ENCODE measurements at regions of chr15 and their contacts with region 1.

Region 1: DNA sequence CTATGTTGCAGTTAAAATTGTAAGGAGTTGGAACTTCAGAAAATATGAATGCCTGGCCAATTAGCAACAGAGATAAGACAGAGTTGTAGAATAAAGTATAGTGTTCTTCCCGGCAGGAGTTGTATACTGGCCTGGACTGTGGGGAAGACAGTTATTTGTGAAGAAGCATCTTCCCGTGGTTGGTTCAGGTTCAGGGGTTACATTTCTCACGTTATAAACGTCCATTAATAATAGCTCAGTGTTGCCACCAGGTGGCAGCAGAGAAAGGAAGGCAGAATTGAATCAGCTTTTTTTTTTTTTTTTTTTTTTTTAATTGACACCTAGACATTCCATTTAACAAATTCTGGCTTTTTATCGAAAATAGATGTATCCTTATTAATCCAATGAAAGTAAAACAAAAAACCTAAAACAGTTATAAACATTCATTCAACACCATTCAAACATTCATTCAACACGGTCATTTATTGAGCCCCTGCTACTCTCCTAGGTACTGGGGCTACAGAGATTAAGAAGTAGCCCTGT is 66.4 kb upstream of the NR2E3 start:
- DNase-seq: peak; percentile 46
- ATAC-seq: no peak; the same call in 1 of the 2 replicates
- H3K4me3 Mint-ChIP-seq: no peak overlapping the region
- H3K27ac Mint-ChIP-seq: no peak overlapping the region
- H3K4me1 Mint-ChIP-seq: no peaks in the 10 kb centered on the region
- H3K27me3 Mint-ChIP-seq: no peaks in the 10 kb centered on the region
- CTCF ChIP-seq: peak; percentile 67

Region 2: GRCh38 chr15:71532994-71533393 is 210.9 kb before region 1 on chr15:
- CTCF ChIA-PET with region 1: interaction called, 12 read pairs
- POLR2A ChIA-PET with region 1: interaction called, 4 read pairs
- DNase-seq: peak; percentile 32
- ATAC-seq: peak; percentile 60
- H3K4me3 Mint-ChIP-seq: no peak overlapping the region; the same call in 1 of the 2 replicates
- H3K27ac Mint-ChIP-seq: no peak overlapping the region
- H3K4me1 Mint-ChIP-seq: no peaks in the 10 kb centered on the region
- H3K27me3 Mint-ChIP-seq: no peaks in the 10 kb centered on the region
- CTCF ChIP-seq: peak; percentile 75

Region 3: DNA sequence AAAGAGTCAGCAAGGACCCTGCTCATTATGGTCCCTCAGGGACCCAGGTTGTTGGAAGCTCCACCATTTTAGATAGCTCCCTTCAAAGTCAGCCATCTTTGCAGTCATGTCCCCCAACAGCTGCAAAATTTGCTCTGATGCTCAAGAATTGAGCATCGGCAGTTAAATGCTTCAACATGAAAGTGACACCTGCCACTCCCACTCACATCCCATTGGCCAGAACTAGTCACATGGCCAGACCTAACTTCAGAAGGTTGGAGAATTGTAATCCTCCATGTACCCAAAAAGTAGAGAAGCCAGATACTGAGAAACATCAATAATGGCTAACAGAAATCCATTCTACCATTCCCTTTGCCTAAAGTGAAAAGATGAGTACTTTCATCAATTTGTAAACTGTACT is 105.0 kb before region 1 on chr15:
- CTCF ChIA-PET with region 1: interaction called, 10 read pairs
- POLR2A ChIA-PET with region 1: no interaction called
- DNase-seq: no peak
- ATAC-seq: no peak
- H3K4me3 Mint-ChIP-seq: no peak overlapping the region
- H3K27ac Mint-ChIP-seq: no peak overlapping the region
- H3K4me1 Mint-ChIP-seq: peaks cover 33% of the 10 kb centered on the region
- H3K27me3 Mint-ChIP-seq: no peaks in the 10 kb centered on the region
- CTCF ChIP-seq: no peak

Region 4: DNA sequence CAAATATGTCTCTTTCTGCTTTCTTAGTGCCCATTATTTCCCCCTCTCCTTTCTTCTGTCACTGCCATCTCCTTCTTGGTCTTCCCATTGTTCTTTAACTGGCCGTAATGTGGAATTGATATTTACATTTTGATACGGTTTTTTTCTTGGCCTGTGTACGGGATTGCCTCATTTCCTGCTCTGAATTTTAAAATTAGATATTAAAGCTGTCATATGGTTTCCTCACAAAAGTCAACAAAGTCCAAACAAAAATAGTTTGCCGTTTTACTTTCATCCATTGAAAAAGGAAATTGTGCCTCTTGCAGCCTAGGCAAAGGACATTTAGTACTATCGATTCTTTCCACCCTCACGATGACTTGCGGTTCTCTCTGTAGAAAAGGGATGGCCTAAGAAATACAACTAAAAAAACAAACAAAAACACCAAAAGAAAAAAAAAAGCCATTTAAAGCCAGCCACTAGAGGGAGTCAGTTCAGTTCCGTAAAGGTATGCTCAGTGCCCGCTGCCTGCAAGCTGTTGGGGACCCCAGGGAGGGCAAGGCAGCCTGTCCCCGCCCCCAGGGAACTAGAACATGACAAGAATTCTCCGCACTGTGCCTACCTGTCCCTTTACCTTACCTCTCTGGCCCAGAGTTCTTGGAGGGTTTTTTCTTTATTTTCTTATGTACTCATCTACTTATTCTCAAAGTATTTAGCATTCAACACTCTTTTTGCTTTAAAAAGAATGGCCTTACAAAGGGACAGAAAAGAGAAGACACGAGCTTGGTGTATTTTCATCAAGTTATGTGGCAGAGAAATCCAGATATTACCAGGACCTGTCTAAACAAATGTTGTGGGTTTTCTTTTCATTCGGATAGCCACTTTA is 36.4 kb after region 1 on chr15:
- CTCF ChIA-PET with region 1: interaction called, 18 read pairs
- POLR2A ChIA-PET with region 1: no interaction called
- DNase-seq: peak; percentile 81
- ATAC-seq: peak; percentile 95
- H3K4me3 Mint-ChIP-seq: no peak overlapping the region
- H3K27ac Mint-ChIP-seq: peak overlapping the region; percentile 63
- H3K4me1 Mint-ChIP-seq: peaks cover 9% of the 10 kb centered on the region
- H3K27me3 Mint-ChIP-seq: no peaks in the 10 kb centered on the region
- CTCF ChIP-seq: peak; percentile 75

Region 5: GRCh38 chr15:71806452-71806931 is 62.6 kb after region 1 on chr15:
- CTCF ChIA-PET with region 1: interaction called, 34 read pairs
- POLR2A ChIA-PET with region 1: no interaction called
- DNase-seq: no peak
- ATAC-seq: no peak
- H3K4me3 Mint-ChIP-seq: peak overlapping the region; percentile 60
- H3K27ac Mint-ChIP-seq: peak overlapping the region; percentile 87; the same call in 1 of the 2 replicates
- H3K4me1 Mint-ChIP-seq: peaks cover 48% of the 10 kb centered on the region
- H3K27me3 Mint-ChIP-seq: no peaks in the 10 kb centered on the region; the same call in 1 of the 2 replicates
- CTCF ChIP-seq: no peak

Region 6: DNA sequence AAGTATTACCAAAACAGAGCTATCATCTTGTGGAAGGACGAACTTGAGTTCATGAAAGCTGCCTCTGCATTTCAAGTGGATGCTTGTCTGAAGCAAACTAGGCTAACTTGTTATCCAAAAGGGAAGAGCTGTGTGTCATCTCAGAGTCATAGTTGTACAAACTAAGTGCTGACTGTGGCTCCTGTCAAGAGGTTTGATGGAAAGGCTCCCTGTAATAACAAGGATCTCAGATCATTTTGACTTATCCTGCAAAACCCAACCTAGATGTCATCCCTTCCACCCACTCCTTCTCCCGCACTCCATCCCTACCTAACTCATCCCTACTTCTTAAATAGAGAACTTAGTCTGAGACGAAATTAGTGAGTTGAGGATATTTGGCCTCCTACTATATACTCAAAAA is 177.3 kb after region 1 on chr15:
- CTCF ChIA-PET with region 1: no interaction called
- POLR2A ChIA-PET with region 1: no interaction called
- DNase-seq: no peak
- ATAC-seq: no peak
- H3K4me3 Mint-ChIP-seq: no peak overlapping the region
- H3K27ac Mint-ChIP-seq: no peak overlapping the region
- H3K4me1 Mint-ChIP-seq: peaks cover 5% of the 10 kb centered on the region
- H3K27me3 Mint-ChIP-seq: no peaks in the 10 kb centered on the region
- CTCF ChIP-seq: no peak

Measured in WTC11 (cell line).